Endothelial cell of umbilical vein (primary cell): ENCODE measurements at regions of chr18 and their contacts with region 1.

Region 1: DNA sequence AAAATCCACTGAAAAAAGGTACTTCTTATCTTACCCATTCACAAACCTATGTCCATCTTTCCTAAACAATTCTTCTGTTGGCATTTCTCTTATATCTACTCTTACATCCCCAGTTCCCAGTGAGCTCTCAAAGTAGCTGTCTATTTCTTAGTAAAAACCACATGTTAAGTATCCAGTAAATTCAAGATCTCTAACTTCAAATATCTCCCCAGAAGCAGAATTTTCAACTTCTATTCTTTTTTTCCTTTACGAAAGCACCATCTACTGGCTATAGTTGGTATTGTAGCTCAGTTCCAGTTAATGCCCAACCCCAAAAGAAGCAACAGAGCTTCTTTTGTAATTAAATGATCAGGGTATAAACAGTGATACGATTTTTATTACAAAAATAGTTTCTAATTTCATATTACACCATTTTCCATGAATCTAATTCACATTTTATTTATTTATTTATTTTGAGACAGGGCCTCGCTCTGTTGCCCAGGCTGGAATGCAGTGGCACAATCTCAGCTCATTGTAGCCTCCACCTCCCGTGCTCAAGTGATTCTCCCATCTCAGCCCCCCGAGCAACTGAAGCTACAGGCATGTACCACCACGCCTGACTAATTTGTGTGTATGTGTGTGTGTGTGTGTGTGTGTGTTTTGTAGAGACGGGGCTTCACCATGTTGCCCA is 28.5 kb downstream of the HRH4 start:
- DNase-seq: peak; percentile 54
- H3K4me3 ChIP-seq: no peak overlapping the region
- H3K27ac ChIP-seq: no peak overlapping the region
- H3K4me1 ChIP-seq: no peaks in the 10 kb centered on the region
- H3K27me3 ChIP-seq: peaks cover 14 to 16% of the 10 kb centered on the region in 2 experiments
- CTCF ChIP-seq: peak; percentile 42 to 56
- POLR2A ChIP-seq: no peak

Region 2: GRCh38 chr18:24322584-24323136 is 166.3 kb before region 1 on chr18:
- CTCF ChIA-PET with region 1: no interaction called
- POLR2A ChIA-PET with region 1: no interaction called
- dilution Hi-C with region 1: no loop called
- intact Hi-C with region 1: no loop called
- DNase-seq: peak; percentile 18
- H3K4me3 ChIP-seq: no peak overlapping the region
- H3K27ac ChIP-seq: no peak overlapping the region
- H3K4me1 ChIP-seq: peaks cover 2% of the 10 kb centered on the region
- H3K27me3 ChIP-seq: no peaks in the 10 kb centered on the region
- CTCF ChIP-seq: no peak
- POLR2A ChIP-seq: no peak

Region 3: DNA sequence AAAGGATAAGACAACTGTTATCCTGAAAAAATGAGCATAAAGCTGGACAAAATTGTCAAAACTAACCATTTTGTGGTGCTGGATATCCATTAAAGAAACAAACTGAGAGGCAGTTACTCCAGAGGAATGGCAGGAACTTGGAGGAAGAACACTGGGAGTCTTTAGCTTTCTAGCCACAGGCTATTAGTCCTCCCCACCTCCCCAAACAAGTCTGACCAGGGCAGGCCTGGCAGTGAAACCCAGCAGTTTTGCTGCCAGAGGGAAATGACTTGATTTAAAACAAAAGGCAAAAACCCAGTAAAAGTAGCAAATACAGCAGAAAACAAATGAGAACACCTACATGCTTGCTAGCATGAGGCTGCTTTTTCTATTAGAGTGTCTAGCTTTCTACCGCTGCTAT is 126.2 kb before region 1 on chr18:
- CTCF ChIA-PET with region 1: interaction called, 355 read pairs
- POLR2A ChIA-PET with region 1: interaction called, 4 read pairs
- dilution Hi-C with region 1: no loop called
- intact Hi-C with region 1: loop called (anchors 1 kb)
- DNase-seq: no peak
- H3K4me3 ChIP-seq: no peak overlapping the region
- H3K27ac ChIP-seq: no peak overlapping the region
- H3K4me1 ChIP-seq: no peaks in the 10 kb centered on the region
- H3K27me3 ChIP-seq: no peaks in the 10 kb centered on the region
- CTCF ChIP-seq: no peak
- POLR2A ChIP-seq: no peak

Region 4: DNA sequence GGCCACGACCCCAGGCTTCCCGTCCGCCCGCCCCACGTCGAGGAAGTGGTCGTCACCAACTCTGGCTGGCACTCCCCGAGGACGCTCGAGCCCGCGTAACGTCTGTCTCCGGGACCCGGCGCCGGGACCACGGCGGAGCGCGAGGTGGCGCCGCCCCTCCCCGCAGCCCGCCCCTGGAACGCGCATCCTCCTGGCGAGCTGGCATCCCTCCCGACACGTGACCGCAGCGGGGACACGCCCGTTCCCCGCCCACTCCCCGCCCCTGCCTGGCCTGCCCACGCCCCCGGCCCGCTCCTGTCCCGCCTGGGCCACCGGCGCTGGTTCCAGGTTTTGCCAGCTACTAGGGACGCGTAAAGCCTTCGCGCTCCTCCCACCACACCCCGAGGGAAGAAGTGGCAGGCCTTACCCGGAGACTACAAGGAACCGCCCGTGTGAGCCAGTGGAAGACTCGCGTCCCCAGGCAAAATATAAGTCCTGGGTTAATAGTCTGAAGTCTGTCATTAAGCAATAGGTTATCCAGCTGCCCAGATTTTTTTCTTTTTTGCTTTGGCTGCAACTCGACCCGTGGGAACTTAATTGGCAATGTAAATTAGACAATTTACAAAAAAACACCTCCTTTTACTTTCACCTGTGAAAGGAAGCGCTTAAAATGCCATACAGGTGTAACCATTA is 91.1 kb before region 1 on chr18 and contains the start of gene OSBPL1A:
- CTCF ChIA-PET with region 1: interaction called, 10 read pairs
- POLR2A ChIA-PET with region 1: no interaction called
- dilution Hi-C with region 1: no loop called
- intact Hi-C with region 1: no loop called
- DNase-seq: peak; percentile 95
- H3K4me3 ChIP-seq: peak within 1 kb of the TSS; percentile 4 to 86 (median 52)
- H3K27ac ChIP-seq: peak within 1 kb of the TSS; percentile 57
- H3K4me1 ChIP-seq: peaks cover 10% of the 10 kb centered on the region
- H3K27me3 ChIP-seq: no peaks in the 10 kb centered on the region
- CTCF ChIP-seq: no peak
- POLR2A ChIP-seq: peak; percentile 83
- total RNA-seq, gene OSBPL1A: 12.7 and 16.5 TPM in 2 replicates

Region 5: GRCh38 chr18:24462838-24463775 is 25.9 kb before region 1 on chr18:
- CTCF ChIA-PET with region 1: interaction called, 11 read pairs
- POLR2A ChIA-PET with region 1: no interaction called
- dilution Hi-C with region 1: no loop called
- intact Hi-C with region 1: no loop called
- DNase-seq: no peak
- H3K4me3 ChIP-seq: no peak overlapping the region
- H3K27ac ChIP-seq: no peak overlapping the region
- H3K4me1 ChIP-seq: no peaks in the 10 kb centered on the region
- H3K27me3 ChIP-seq: no peaks in the 10 kb centered on the region
- CTCF ChIP-seq: no peak
- POLR2A ChIP-seq: no peak

Region 6: GRCh38 chr18:24502644-24503523 is 13.9 kb after region 1 on chr18:
- CTCF ChIA-PET with region 1: interaction called, 19 read pairs
- POLR2A ChIA-PET with region 1: no interaction called
- dilution Hi-C with region 1: no loop called
- intact Hi-C with region 1: no loop called
- DNase-seq: no peak
- H3K4me3 ChIP-seq: no peak overlapping the region
- H3K27ac ChIP-seq: no peak overlapping the region
- H3K4me1 ChIP-seq: no peaks in the 10 kb centered on the region
- H3K27me3 ChIP-seq: peaks cover 0 to 3% of the 10 kb centered on the region in 2 experiments
- CTCF ChIP-seq: no peak
- POLR2A ChIP-seq: no peak

Region 7: GRCh38 chr18:24543805-24544498 is 55.0 kb after region 1 on chr18:
- CTCF ChIA-PET with region 1: interaction called, 17 read pairs
- POLR2A ChIA-PET with region 1: no interaction called
- dilution Hi-C with region 1: no loop called
- intact Hi-C with region 1: no loop called
- DNase-seq: peak; percentile 42
- H3K4me3 ChIP-seq: no peak overlapping the region
- H3K27ac ChIP-seq: no peak overlapping the region
- H3K4me1 ChIP-seq: no peaks in the 10 kb centered on the region
- H3K27me3 ChIP-seq: peaks cover 5 to 7% of the 10 kb centered on the region in 2 experiments
- CTCF ChIP-seq: peak; percentile 30 to 32
- POLR2A ChIP-seq: no peak